ENCODE measurements at regions of chr11 and their contacts with region 1.

Region 1: DNA sequence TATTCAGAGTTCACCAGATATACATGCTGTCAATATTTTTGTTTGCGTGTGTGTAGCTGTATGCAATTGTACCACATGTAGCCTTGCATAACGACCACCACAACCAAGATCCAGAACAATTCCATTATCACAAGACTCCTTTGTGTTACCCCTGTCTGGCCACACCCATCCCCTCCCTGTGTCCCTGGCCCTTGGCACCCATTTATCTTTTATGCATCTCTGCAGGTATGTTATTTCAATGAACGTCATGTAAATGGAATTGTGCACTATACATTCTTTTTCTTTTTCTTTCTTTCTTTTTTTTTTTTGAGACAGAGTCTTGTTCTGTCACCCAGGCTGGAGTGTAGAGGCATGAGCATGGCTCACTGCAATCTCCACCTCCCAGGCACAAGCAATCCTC is 9.7 kb upstream of the PAFAH1B2 start:
- DNase-seq: no peak
- ATAC-seq: no peak

Region 2: DNA sequence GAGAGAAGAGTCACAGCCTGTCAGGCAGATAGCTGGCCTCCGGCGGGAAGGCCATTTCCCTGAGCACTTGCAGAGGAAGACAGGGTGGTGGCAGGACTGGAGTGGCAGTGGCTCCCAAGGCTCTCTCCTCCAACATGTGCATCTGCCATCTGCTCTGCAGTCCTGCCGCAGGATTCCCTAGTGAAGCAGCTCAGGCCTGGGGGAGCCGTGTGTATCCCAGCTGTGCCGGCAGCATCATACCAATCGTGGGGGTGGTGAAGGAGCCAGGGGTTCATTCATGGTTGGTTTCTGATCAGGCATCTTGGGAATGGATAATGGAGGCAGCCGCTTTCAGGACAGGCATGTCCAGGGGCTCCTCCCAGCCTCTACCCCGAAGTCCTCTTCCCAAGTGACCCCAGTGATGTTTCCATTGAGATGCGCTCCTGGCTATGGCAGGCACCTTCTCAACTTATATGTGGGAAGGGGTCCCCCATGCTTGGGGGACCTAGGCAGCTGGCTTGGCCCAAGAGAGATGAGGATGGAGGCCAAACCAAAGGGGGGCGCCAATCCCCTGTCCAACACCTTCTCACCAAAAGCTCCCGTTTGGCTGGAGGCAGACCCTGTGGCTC is 70.9 kb after region 1 on chr11:
- intact Hi-C with region 1: loop called (anchors 5 kb)
- DNase-seq: peak; percentile 46
- ATAC-seq: no peak

Region 3: DNA sequence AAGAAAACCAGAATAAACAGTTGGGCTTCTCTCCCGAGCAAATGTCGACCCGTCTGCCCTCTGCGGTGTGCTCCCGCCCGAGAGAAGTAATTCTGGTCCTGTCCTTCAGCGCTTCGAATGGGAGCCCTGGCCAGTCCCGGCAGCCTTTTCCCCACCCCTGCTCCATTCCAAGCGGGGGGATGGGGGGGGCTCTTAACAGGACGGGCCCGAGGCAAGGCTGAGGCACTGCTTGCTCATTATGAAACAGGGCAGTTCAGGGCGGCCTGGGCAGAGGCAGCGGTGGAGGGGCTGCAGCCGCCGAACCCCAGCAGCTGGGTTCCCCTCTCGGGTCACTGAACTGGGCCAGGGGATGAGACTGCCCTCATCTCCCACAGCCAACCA is 165.8 kb after region 1 on chr11:
- intact Hi-C with region 1: no loop called
- DNase-seq: no peak
- ATAC-seq: peak; percentile 64

Region 4: GRCh38 chr11:117519170-117519569 is 384.7 kb after region 1 on chr11:
- intact Hi-C with region 1: no loop called
- DNase-seq: no peak
- ATAC-seq: no peak

Measured in Right ventricle myocardium inferior (tissue), 1 donor.